Left ventricle myocardium superior (tissue), 1 donor: ENCODE measurements at regions of chr16 and their contacts with region 1.

Region 1: DNA sequence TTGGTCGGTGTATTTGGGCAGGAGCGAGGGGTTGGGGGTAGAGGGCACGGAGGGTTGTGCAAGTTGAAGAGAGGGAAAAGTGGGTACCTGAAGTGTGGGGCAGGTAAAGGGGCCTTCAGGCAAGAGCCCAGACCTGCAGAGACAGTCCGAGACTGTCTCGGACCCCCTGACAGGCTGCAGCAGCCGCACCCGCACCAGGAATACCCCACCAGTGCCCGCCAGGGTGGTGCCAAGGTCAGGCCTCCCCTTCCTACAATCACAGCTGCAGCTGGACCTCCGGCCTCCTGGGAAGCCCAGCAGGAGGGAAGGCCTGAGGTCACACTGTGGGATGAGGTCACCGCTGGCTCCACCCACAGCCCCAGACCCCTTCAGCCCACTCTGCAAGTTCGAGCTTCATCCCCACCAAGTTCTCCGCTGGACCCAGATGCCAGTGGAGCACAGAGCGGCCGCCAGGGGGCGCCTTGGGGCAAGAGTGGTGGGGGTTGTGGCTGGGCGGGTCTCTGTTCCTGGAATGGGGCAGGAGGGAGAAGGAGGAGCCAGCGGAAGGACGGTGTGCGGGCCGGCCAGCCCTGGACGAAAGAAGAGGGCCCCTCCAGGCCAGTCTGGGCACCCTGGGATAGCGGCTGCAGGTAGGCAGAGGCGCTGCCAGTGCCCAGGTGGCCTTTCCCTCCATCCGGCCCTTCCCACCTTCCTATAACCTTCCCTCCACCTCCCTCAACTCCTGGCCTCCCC is at the start of gene HSD3B7:
- DNase-seq: peak; percentile 95
- ATAC-seq: peak; percentile 93
- total RNA-seq, gene HSD3B7: 7.4 TPM

Region 2: DNA sequence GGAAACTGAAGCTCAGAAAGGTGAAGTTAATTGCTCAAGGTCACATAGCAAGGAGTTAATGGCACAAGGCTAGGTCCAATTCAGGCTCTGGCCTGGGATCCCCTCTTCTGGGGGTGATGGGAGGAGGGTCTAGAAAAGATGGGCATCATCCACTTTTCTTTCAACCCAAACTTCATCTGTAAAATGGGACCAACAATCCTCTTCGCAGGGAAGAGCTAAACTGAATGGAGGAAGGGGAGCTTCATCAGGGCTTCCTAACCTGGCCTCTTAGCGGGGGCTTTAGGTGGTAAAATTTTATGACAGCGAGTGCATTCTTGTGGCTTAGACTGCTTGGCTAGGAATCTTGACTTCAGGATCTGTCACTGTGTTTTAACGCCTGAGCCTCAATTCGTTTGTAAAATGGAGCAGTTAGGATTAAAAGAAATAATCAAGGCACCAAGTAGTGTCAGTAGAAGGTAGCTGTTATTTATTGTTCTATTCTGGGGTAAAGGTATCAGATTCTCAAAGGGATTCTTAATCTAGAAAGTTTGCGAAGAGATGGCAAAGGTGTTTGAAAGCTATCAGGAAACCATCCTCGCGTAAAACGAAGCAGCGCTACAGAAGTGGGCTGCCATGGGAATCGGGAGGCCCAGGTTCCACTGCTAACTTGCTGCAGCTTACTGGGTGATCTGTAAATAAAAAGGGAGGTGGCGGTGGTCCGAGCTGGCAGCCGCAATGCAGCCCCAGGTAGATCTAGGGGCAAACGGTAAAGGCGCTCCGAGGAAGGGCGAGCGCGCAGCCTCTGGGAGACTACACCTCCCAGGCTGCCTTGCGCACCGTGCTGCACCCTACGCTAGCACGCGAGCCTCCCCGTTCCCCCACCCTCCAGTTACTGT is 287.3 kb before region 1 on chr16:
- intact Hi-C with region 1: no loop called
- DNase-seq: no peak
- ATAC-seq: peak; percentile 94

Region 3: GRCh38 chr16:30882429-30883310 is 102.2 kb before region 1 on chr16:
- intact Hi-C with region 1: no loop called
- DNase-seq: no peak
- ATAC-seq: peak; percentile 16

Region 4: GRCh38 chr16:31016018-31016417 is 31.2 kb after region 1 on chr16:
- intact Hi-C with region 1: no loop called
- DNase-seq: no peak
- ATAC-seq: no peak

Region 5: GRCh38 chr16:31440516-31441184 is 455.8 kb after region 1 on chr16:
- intact Hi-C with region 1: loop called (anchors 10 kb)
- DNase-seq: no peak
- ATAC-seq: no peak

Region 6: GRCh38 chr16:31868691-31869167 is 883.9 kb after region 1 on chr16:
- intact Hi-C with region 1: loop called (anchors 10 kb)
- DNase-seq: peak; percentile 81
- ATAC-seq: peak; percentile 63